ENCODE measurements at regions of chr18 and their contacts with region 1.

Region 1: DNA sequence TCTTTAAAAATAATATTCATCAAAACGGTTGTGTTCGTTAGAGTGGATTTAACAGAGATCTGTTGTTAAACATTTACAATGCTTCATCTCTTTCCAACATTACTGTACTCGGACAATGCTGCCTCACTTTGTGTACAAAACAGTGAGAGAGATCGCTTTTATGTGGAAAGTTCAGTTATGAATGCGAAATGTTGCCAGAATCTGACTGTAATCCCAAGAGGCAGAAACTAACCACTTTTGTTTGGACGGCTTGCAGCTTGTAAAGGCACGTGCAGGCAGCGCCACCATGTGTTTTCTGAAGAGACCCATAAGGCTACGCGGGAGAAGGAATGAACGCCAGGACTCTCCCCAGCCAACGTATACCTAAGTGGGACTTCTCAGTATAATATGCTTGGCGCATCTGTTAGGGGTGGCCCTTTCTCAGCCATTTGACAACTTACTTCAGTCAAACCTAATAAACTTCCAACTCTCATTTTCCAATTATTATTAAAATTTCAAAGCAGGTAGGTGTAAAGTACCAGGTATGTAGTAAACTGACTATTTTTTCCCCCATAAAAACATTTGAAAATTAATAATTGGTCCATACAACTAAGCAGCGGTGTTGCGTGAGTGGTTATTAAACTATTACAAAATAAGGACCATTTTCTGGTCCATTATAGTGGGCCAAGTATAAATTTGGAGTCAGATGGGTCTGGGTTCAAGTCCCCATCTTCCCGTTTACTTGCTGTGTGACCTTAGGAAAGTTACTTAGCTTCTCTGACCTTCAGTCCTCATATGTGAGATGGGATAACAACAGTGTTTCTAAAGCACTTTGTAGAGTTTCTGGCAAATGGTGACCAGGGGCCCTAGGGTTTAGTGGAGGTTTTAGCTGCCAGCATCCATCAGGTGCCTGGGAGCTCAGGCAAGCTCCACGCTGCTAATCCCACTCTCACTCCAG is 5.6 kb upstream of the NAPG start:
- DNase-seq: peak; percentile 73
- H3K4me3 ChIP-seq: no peak overlapping the region
- H3K27ac ChIP-seq: no peak overlapping the region
- H3K4me1 ChIP-seq: peaks cover 20% of the 10 kb centered on the region
- H3K27me3 ChIP-seq: no peaks in the 10 kb centered on the region
- CTCF ChIP-seq: peak; percentile 86 to 95

Region 2: DNA sequence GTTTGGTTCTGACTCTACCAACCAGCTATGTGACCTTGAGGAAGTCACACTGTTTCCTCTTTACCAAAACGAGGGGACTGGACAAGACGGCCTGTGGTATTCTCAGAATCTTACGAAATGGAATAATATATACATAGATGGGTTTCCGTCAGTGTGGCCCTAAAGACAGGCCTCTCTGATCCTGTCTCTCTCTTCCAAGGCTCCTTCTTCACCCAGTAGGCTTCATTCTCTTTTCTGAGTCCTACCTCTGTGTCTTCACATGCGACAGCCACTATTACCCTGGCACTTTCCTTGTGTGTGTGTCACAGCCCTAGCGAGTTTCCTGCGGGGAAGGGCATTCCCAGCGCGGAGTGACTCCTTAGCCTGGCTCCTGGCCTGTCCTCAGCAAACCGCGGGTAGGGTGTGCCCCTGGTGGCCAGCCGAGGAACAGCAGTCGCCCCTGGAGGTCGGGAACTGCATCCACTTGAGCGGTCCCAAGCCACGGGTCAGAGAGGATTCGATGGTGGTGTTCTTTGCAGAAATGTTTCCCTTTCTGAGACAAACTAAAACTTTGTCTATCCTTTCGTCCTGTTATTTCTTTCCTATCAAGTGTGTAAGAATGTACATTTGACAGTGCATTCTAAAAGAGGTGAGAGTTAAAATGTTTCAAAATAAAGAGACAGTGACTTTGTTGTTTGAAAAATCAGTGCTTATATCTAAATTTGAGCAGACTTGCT is 748.8 kb before region 1 on chr18:
- CTCF ChIA-PET with region 1: no interaction called
- dilution Hi-C with region 1: no loop called
- in situ Hi-C with region 1: loop called in 1 of 2 experiments (anchors 25 kb)
- intact Hi-C with region 1: no loop called
- DNase-seq: peak; percentile 37
- H3K4me3 ChIP-seq: no peak overlapping the region
- H3K27ac ChIP-seq: no peak overlapping the region
- H3K4me1 ChIP-seq: no peaks in the 10 kb centered on the region
- H3K27me3 ChIP-seq: no peaks in the 10 kb centered on the region
- CTCF ChIP-seq: peak; percentile 87 to 89

Region 3: DNA sequence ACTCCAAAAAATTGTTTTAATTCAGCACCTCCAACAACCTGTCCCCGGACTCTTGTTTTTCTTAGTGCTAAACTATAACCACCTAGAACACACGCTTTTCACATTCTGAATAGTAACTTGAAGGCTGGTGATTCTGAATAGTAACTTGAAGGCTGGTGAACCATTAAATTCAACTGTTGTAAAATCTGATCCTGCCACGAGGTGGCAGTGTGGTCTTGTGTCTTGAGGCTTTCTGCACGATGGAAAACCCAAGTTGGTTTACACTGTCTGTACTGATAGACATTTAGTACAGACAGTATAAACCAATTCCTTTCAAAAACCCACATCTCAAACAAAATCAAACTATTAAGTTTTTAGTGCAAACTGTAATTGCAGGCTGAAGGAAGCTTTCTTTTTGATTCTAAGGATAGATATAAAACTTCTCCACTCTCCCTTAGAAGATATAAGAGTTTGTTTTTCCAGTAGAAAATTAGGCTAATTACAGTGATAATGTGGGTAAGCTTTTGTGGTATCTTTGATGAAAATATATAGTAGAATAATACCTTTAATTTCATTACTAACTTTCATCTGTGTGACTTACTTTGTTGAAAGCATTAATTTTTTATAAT is 548.9 kb before region 1 on chr18:
- CTCF ChIA-PET with region 1: no interaction called
- dilution Hi-C with region 1: no loop called
- in situ Hi-C with region 1: loop called (anchors 5 to 10 kb)
- intact Hi-C with region 1: loop called (anchors 1 kb)
- DNase-seq: peak; percentile 63
- H3K4me3 ChIP-seq: no peak overlapping the region
- H3K27ac ChIP-seq: no peak overlapping the region
- H3K4me1 ChIP-seq: no peaks in the 10 kb centered on the region
- H3K27me3 ChIP-seq: no peaks in the 10 kb centered on the region
- CTCF ChIP-seq: peak; percentile 59 to 70

Region 4: DNA sequence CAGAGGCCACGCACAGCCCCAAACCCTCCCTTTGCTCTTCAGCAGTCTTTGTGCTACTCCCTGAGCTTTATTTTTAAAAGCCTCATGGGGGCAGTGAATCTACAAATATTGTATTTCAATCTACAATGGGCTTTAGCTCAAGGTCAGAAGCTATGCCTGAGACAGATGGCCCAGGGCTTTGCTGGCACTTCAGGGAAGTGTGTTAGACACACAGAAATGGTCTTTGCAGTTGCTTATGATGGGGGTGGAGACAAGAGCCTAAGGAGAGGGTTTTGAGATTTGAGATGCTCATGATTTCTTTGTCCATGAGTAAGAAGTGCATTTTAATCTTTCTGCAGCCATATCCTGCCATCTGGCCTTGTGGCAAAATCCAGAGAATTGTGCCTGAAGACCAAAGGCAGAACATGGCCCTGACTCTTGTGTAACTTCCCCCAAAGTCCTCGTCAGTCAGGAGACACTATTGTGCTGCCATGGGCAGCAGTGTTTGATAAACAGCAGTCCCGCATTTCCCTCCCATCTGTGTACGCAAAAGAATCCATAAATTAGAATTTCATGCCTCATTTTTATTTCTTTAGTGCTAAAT is 513.9 kb before region 1 on chr18:
- CTCF ChIA-PET with region 1: interaction called, 3 read pairs
- dilution Hi-C with region 1: no loop called
- in situ Hi-C with region 1: no loop called
- intact Hi-C with region 1: loop called (anchors 1 kb)
- DNase-seq: peak; percentile 23
- H3K4me3 ChIP-seq: no peak overlapping the region
- H3K27ac ChIP-seq: no peak overlapping the region
- H3K4me1 ChIP-seq: no peaks in the 10 kb centered on the region
- H3K27me3 ChIP-seq: no peaks in the 10 kb centered on the region
- CTCF ChIP-seq: peak in 1 of 2 donors; percentile 29

Region 5: GRCh38 chr18:10421859-10422258 is 98.4 kb before region 1 on chr18:
- CTCF ChIA-PET with region 1: no interaction called
- dilution Hi-C with region 1: no loop called
- in situ Hi-C with region 1: no loop called
- intact Hi-C with region 1: loop called (anchors 2 kb)
- DNase-seq: peak; percentile 89
- H3K4me3 ChIP-seq: no peak overlapping the region
- H3K27ac ChIP-seq: peak overlapping the region; percentile 97
- H3K4me1 ChIP-seq: peaks cover 57% of the 10 kb centered on the region
- H3K27me3 ChIP-seq: no peaks in the 10 kb centered on the region
- CTCF ChIP-seq: no peak

Region 6: DNA sequence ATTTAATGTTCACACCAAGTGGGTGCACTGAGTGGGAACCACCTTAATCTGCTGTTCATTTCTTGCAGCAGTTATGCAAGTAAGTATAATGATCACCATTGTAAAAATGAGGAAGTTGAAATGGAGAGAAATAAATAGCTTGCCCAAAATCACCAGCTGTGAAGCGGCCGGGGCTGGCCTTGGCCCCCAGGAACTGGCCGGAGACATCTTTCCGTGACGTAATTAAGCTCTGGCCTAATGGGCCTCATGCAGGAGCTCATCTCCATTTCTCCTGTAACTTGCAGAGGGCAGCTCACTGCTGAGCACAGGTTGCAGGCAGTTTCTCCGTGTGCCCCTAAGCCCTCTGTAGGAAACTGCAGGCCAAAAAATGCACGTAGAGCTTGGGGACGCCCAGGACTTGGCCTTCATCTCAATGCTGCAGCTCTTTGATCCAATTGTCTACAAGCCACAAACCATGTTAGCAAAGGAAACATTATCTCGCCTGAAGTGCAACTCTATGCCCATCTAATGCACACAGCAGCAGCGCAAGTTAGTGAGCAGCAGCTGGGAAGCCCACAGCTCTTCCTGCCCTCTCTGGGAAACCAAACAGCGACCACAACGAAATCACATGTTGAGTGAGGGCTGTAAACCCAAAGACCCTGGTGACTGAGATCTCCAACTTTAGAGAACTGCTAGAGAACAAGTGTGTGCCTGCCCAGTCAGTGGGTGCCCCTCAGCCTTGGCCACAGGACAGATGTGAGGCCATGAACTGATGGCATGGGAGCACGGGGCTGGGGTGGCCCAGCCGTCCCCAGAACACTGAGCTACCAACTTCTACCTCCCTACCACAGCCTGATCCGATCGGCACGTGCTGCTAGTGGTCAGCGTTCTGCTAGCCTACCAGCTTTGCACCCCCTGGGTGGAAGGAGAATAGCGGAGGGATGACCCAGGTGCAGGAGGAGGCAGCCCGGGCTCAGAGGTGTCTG is 37.0 kb before region 1 on chr18:
- CTCF ChIA-PET with region 1: no interaction called
- dilution Hi-C with region 1: no loop called
- in situ Hi-C with region 1: no loop called
- intact Hi-C with region 1: no loop called
- DNase-seq: no peak
- H3K4me3 ChIP-seq: no peak overlapping the region
- H3K27ac ChIP-seq: no peak overlapping the region
- H3K4me1 ChIP-seq: no peaks in the 10 kb centered on the region
- H3K27me3 ChIP-seq: no peaks in the 10 kb centered on the region
- CTCF ChIP-seq: no peak

Region 7: DNA sequence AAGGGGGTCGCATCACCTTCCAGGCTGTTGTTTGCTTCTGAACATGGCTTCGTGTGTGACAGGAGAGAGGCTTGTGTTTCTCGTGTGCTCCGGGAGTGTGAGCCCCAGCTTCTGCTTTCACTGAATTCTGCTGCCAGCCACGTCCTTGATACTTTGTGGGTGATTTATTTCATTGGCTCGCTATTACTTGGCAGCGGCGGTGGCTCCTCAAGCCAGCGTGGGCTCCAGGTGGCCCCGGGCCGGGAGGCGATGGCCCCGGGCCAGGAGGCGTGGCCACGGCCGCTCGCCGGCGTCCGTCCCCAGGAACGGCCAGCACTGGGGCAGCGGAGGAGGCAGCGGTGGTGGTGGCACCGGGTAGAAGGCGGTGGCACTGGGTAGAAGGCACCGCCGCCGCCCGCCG is 68.7 kb after region 1 on chr18:
- CTCF ChIA-PET with region 1: no interaction called
- dilution Hi-C with region 1: no loop called
- in situ Hi-C with region 1: no loop called
- intact Hi-C with region 1: no loop called
- DNase-seq: no peak
- H3K4me3 ChIP-seq: no peak overlapping the region
- H3K27ac ChIP-seq: no peak overlapping the region
- H3K4me1 ChIP-seq: no peaks in the 10 kb centered on the region
- H3K27me3 ChIP-seq: no peaks in the 10 kb centered on the region
- CTCF ChIP-seq: no peak